PC-3 (cell line): ENCODE measurements at regions of chr7 and their contacts with region 1.

Region 1: GRCh38 chr7:135886345-135887132 is 90.6 kb downstream of the MTPN start:
- DNase-seq: no peak
- ATAC-seq: no peak
- H3K4me3 ChIP-seq: no peak overlapping the region
- H3K27ac ChIP-seq: no peak overlapping the region
- H3K4me1 ChIP-seq: peaks cover 12% of the 10 kb centered on the region
- H3K27me3 ChIP-seq: peaks cover 33% of the 10 kb centered on the region
- CTCF ChIP-seq: no peak

Region 2: DNA sequence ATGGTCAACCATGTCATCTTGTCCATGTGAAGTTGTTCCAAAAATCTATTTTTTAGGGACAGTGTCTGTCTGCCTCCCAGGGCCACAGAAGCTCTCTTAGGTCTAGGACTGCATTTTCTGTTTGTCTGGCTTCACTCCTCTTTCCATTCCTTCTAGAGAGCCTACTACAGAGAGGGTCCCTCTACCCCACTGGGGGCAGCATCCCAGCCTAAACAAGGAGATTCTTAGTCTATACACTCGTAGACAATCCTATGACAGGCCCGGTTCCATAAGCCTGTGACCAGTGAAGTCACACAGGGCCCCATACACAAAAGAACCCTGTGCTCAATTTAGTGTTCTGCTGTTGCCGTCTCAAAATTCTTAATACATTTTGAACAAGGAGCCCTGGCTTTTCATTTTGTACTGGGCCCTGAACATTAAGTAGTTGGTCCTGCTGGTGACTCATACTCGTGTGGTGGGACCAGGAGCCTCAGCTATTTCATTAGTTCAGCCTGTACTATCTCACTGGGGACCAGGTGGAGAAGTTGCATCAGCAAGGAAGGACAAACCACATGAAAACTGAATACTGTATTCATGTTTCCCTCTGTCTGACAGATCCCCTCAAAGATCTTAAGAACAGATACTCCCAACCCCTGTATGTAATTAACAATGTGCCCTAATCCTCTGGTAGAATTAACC is 114.4 kb before region 1 on chr7:
- CTCF ChIA-PET with region 1: no interaction called
- POLR2A ChIA-PET with region 1: no interaction called
- intact Hi-C with region 1: no loop called
- DNase-seq: peak; percentile 46
- ATAC-seq: no peak; the same call in 1 of the 2 replicates
- H3K4me3 ChIP-seq: no peak overlapping the region
- H3K27ac ChIP-seq: no peak overlapping the region
- H3K4me1 ChIP-seq: peaks cover 19% of the 10 kb centered on the region
- H3K27me3 ChIP-seq: no peaks in the 10 kb centered on the region
- CTCF ChIP-seq: no peak

Region 3: DNA sequence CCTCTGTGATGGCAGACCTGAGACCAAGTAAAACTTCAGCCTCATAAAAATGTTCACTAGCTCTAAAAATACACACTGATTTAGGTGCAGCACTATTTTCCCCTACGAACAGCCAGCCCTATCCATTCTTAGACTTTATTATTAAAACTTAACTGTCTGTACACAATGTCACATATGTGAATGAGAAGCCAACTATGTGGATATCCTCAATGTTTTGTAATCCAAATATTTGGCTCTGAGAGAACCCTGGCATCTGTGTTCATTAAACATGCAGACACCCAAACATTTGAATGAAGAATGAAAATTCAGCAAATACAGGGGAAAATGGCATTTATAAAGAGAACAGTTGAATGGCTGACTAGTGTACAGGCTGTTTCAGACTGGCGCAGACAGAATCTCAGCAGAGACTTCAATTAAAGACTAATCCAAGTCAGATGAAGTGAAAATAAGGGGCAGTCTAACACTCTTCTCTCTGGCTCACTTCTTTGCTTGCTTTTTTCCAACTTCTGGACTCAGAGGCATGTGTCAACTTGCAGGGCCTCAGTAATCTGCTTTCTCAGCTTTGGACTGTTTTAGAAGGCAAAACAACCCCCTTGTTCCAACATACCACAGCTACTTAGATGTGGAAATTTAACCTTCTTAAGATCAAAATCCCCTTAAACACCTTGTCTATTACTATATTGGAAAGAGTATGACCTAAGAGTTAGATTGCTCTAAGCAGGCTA is 90.5 kb before region 1 on chr7:
- CTCF ChIA-PET with region 1: no interaction called
- POLR2A ChIA-PET with region 1: no interaction called
- intact Hi-C with region 1: loop called (anchors 1 kb)
- DNase-seq: no peak
- ATAC-seq: no peak
- H3K4me3 ChIP-seq: no peak overlapping the region
- H3K27ac ChIP-seq: no peak overlapping the region
- H3K4me1 ChIP-seq: no peaks in the 10 kb centered on the region
- H3K27me3 ChIP-seq: no peaks in the 10 kb centered on the region
- CTCF ChIP-seq: no peak

Region 4: GRCh38 chr7:135853499-135853898 is 33.0 kb before region 1 on chr7:
- CTCF ChIA-PET with region 1: no interaction called
- POLR2A ChIA-PET with region 1: no interaction called
- intact Hi-C with region 1: loop called (anchors 5 kb)
- DNase-seq: peak; percentile 76
- ATAC-seq: peak; percentile 82
- H3K4me3 ChIP-seq: no peak overlapping the region
- H3K27ac ChIP-seq: peak overlapping the region; percentile 84
- H3K4me1 ChIP-seq: peaks cover 28% of the 10 kb centered on the region
- H3K27me3 ChIP-seq: no peaks in the 10 kb centered on the region
- CTCF ChIP-seq: no peak

Region 5: DNA sequence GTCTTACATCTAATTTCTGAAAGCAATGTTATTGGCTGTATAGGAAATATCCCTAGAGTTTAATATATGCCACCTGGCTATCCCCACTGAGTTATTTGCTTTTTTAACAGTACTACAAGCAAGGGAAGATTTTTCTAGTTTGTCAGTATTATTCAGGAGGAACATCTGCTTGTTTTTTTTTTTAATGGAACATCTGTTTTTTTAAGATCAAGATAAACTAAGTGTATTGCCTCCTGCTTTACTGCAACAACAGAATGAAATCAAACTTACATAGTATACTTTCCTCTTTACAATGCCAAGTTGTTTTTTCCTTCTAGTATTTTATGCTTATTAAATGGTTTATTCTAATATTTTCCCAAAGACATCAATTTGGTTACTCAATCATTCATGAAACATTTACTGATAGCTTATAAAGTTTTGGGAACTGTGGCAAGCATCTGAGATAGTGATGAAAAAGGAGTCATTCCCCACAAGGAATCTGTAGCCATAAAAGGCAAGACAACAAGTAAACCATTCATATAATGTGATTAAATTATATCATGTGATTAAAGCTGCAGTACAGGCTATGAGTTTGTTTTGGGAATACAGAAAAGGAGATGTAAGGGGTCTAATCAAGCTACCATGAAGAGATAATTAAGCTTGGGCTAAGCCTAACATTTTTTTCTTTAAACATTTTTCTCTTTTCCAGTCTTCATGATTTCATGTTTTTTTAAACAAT is 73.3 kb after region 1 on chr7:
- CTCF ChIA-PET with region 1: no interaction called
- POLR2A ChIA-PET with region 1: no interaction called
- intact Hi-C with region 1: no loop called
- DNase-seq: no peak
- ATAC-seq: no peak
- H3K4me3 ChIP-seq: no peak overlapping the region
- H3K27ac ChIP-seq: no peak overlapping the region
- H3K4me1 ChIP-seq: no peaks in the 10 kb centered on the region
- H3K27me3 ChIP-seq: no peaks in the 10 kb centered on the region
- CTCF ChIP-seq: no peak

Region 6: GRCh38 chr7:136009488-136010079 is 123.0 kb after region 1 on chr7:
- CTCF ChIA-PET with region 1: no interaction called
- POLR2A ChIA-PET with region 1: no interaction called
- intact Hi-C with region 1: loop called (anchors 5 kb)
- DNase-seq: peak; percentile 76
- ATAC-seq: 0 out of 2 replicates have a peak, but pooled peaks have one; percentile 37
- H3K4me3 ChIP-seq: no peak overlapping the region
- H3K27ac ChIP-seq: no peak overlapping the region
- H3K4me1 ChIP-seq: no peaks in the 10 kb centered on the region
- H3K27me3 ChIP-seq: peaks cover 23% of the 10 kb centered on the region
- CTCF ChIP-seq: peak; percentile 80